Pancreas (tissue), 10 donors: ENCODE measurements at regions of chr10 and their contacts with region 1.

Region 1: DNA sequence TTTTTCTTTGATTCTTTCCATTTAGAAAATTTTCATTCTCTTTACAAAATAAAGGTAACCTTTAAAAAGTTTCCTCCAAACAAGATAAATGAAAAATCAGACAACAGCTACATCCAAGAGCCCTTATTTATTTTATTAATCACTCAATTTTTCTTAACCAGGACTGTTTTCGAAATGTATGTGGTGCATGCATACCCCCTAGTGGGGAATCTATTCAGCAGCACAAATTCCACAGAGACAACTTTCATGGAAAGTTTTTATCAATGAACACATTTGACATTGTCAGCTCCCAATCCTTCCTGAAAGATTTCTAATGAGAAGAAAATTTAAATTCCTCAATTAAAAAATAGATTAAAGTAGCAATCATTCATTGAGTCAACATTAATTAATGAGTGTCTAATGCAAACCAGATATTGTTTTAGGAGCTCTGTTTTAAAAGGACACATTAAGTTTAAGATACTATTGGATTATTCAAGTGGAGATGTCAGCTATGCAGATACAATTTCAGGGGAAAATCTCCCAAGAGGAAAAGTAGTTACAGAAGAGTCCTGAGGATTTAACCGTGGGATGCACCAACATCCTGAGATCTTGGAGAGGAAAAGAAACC is 5.2 kb upstream of the HTR7 start:
- DNase-seq: no peak
- ATAC-seq: peak in 3 of 4 donors; percentile 46 to 63 (median 55)
- H3K4me3 ChIP-seq: no peak overlapping the region
- H3K27ac ChIP-seq: no peak overlapping the region
- H3K4me1 ChIP-seq: no peaks in the 10 kb centered on the region
- H3K27me3 ChIP-seq: peaks cover 0 to 5% (median 0%) of the 10 kb centered on the region in 4 donors
- CTCF ChIP-seq: peak in 3 of 4 donors; percentile 31 to 51 (median 45)

Region 2: DNA sequence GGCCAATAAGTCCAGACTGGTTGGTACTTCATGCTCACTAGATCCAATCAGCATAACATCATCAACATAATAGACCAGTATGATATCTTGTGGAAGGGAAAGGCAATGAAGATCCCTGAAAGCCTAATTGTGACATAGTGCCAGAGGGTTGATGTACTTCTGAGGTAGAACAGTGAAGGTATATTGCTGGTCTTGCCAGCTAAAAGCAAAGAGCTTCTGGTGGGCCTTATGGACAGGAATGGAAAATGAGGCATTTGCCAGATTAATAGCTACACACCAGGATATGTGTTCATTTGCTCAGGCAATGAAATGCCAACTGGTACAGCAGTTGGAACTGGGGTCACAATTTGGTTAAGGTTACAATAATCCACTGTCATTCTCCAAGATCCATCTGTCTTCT is 161.6 kb before region 1 on chr10:
- intact Hi-C with region 1: no loop called
- DNase-seq: no peak
- ATAC-seq: no peak
- H3K4me3 ChIP-seq: no peak overlapping the region
- H3K27ac ChIP-seq: no peak overlapping the region
- H3K4me1 ChIP-seq: no peaks in the 10 kb centered on the region
- H3K27me3 ChIP-seq: no peaks in the 10 kb centered on the region
- CTCF ChIP-seq: no peak

Region 3: GRCh38 chr10:90751107-90751997 is 111.7 kb before region 1 on chr10:
- intact Hi-C with region 1: loop called in 1 of 3 experiments (anchors 10 kb)
- DNase-seq: peak in 2 of 6 donors; percentile 14 to 45
- ATAC-seq: peak in 3 of 4 donors; percentile 66 to 80 (median 78)
- H3K4me3 ChIP-seq: no peak overlapping the region
- H3K27ac ChIP-seq: no peak overlapping the region
- H3K4me1 ChIP-seq: no peaks in the 10 kb centered on the region
- H3K27me3 ChIP-seq: peaks cover 0 to 5% (median 0%) of the 10 kb centered on the region in 4 donors
- CTCF ChIP-seq: peak in 3 of 4 donors; percentile 43 to 63 (median 47)

Region 4: GRCh38 chr10:90935581-90936275 is 72.7 kb after region 1 on chr10:
- intact Hi-C with region 1: no loop called
- DNase-seq: no peak
- ATAC-seq: no peak
- H3K4me3 ChIP-seq: no peak overlapping the region
- H3K27ac ChIP-seq: no peak overlapping the region
- H3K4me1 ChIP-seq: no peaks in the 10 kb centered on the region
- H3K27me3 ChIP-seq: no peaks in the 10 kb centered on the region
- CTCF ChIP-seq: no peak